HAP-1 (cell line): ENCODE measurements at regions of chr3 and their contacts with region 1.

Region 1: GRCh38 chr3:118628704-118629341 is 405.8 kb downstream of the IGSF11 start:
- DNase-seq: peak; percentile 77 to 89
- H3K4me3 ChIP-seq: no peak overlapping the region
- H3K4me1 ChIP-seq: 0 out of 2 replicates have a peak, but pooled peaks cover 5% of the 10 kb centered on the region
- H3K27me3 ChIP-seq: no peaks in the 10 kb centered on the region

Region 2: GRCh38 chr3:118501152-118501551 is 127.7 kb before region 1 on chr3:
- in situ Hi-C with region 1: no loop called
- DNase-seq: peak; percentile 15 to 56
- H3K4me3 ChIP-seq: no peak overlapping the region
- H3K4me1 ChIP-seq: peaks cover 23% of the 10 kb centered on the region
- H3K27me3 ChIP-seq: no peaks in the 10 kb centered on the region

Region 3: DNA sequence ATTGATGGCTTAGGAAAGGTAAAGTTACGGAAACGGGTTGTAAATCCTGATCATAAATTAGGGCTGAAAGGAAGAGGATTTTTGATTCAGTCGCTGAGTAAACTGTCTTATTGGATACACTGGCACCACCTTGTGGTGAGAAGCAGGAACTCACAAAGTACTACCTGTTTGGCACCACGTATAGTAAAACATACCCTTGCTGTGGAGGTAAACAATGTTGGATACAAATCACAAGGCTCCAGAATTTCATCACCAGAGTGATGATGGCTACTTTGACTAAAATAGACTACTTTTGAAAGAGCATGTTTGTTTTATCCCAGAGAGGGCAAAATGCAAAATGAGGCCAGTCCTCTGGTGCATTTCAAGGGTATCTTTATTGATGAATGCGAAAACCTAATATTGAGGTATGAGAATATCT is 188.9 kb after region 1 on chr3:
- in situ Hi-C with region 1: loop called (anchors 25 kb)
- DNase-seq: peak; percentile 72 to 79
- H3K4me3 ChIP-seq: no peak overlapping the region
- H3K4me1 ChIP-seq: peaks cover 8% of the 10 kb centered on the region
- H3K27me3 ChIP-seq: no peaks in the 10 kb centered on the region